PC-9 (cell line): ENCODE measurements at regions of chr9 and their contacts with region 1.

Region 1: GRCh38 chr9:112379177-112380101 is 469 bp upstream of the HSDL2 start:
- DNase-seq: peak; percentile 92 to 100
- H3K4me3 ChIP-seq: peak overlapping the region; percentile 95
- H3K27ac ChIP-seq: peak overlapping the region; percentile 75
- H3K4me1 ChIP-seq: peaks cover 28% of the 10 kb centered on the region
- H3K27me3 ChIP-seq: no peaks in the 10 kb centered on the region
- CTCF ChIP-seq: no peak

Region 2: GRCh38 chr9:112103405-112103804 is 276.0 kb before region 1 on chr9:
- CTCF ChIA-PET with region 1: no interaction called
- POLR2A ChIA-PET with region 1: no interaction called
- intact Hi-C with region 1: no loop called
- DNase-seq: no peak
- H3K4me3 ChIP-seq: no peak overlapping the region
- H3K27ac ChIP-seq: no peak overlapping the region
- H3K4me1 ChIP-seq: no peaks in the 10 kb centered on the region
- H3K27me3 ChIP-seq: no peaks in the 10 kb centered on the region
- CTCF ChIP-seq: no peak

Region 3: DNA sequence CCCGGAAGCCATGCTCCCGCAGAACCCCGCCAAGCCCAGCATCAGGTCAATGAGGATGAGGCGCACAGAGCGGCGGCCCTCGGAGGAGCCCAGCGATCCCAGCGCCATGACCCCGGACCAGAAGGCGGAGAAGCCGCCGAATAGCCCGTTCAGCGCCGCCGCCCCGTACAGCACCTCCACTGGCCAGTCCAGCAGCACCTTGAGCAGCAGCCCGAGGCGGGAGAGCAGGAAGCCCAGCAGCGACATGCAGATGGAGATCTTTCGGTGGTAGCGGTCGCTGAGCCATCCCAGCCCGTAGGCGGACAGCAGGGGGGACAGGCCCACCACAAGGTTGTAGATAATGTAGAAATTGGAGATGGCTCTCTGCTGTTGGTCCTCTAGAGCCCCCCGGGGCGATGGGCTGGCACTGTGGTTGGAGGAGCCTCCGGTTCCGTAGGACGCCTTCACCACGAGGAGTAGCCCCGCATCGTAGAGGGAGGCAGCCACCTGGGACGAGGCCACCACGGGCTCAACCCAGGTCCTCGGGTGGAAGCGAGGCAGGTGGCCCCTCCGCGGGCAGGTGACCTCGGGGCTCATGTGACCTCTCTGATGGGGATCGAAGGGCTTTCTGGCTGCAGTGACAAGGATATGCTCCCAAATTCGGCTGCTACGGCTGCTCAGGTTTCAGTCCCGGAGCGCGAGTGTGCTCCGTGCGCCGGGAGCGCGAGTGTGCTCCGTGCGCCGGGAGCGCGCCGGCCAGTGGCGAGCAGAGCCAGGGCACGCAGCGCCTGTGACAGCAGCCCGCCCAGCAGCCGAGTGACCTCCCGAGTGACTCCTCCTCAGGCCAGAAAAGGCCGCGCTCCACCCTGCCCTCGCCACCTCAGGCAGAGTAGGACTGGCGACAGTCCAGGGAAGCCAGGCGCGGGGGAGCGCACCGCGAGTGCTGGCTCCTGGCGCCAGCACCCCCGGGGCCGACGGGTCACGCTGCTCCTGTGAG is 511.0 kb after region 1 on chr9 and contains the start of gene SLC46A2:
- CTCF ChIA-PET with region 1: no interaction called
- POLR2A ChIA-PET with region 1: no interaction called
- intact Hi-C with region 1: loop called (anchors 10 kb)
- DNase-seq: peak in 1 of 2 experiments; percentile 41
- H3K4me3 ChIP-seq: no peak within 1 kb of the TSS
- H3K27ac ChIP-seq: no peak within 1 kb of the TSS
- H3K4me1 ChIP-seq: no peaks in the 10 kb centered on the region
- H3K27me3 ChIP-seq: no peaks in the 10 kb centered on the region
- CTCF ChIP-seq: no peak
- total RNA-seq, gene SLC46A2: not detected in 2 replicates

Region 4: DNA sequence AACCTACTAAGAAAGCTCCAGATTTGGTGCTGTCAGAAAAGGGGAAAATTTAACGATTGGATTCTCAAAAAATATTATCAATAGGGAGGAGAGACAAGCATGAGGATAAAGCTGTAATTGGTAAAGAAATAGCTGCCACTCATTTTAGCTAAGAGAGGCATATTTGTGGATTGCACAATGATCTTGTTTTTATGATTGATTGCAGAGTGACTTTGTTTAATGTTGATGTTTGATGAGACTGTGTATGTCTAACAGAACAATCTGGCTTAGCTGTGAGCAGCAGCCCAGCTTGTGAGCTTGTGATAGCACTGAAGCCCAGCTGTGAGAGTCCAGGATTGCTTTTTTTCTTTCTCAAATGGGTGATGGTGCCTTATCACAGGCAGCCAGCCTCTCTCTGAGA is 576.1 kb after region 1 on chr9:
- CTCF ChIA-PET with region 1: no interaction called
- POLR2A ChIA-PET with region 1: no interaction called
- intact Hi-C with region 1: no loop called
- DNase-seq: no peak
- H3K4me3 ChIP-seq: no peak overlapping the region
- H3K27ac ChIP-seq: no peak overlapping the region
- H3K4me1 ChIP-seq: no peaks in the 10 kb centered on the region
- H3K27me3 ChIP-seq: peaks cover 35% of the 10 kb centered on the region
- CTCF ChIP-seq: no peak